ENCODE measurements at regions of chr20 and their contacts with region 1.

Region 1: DNA sequence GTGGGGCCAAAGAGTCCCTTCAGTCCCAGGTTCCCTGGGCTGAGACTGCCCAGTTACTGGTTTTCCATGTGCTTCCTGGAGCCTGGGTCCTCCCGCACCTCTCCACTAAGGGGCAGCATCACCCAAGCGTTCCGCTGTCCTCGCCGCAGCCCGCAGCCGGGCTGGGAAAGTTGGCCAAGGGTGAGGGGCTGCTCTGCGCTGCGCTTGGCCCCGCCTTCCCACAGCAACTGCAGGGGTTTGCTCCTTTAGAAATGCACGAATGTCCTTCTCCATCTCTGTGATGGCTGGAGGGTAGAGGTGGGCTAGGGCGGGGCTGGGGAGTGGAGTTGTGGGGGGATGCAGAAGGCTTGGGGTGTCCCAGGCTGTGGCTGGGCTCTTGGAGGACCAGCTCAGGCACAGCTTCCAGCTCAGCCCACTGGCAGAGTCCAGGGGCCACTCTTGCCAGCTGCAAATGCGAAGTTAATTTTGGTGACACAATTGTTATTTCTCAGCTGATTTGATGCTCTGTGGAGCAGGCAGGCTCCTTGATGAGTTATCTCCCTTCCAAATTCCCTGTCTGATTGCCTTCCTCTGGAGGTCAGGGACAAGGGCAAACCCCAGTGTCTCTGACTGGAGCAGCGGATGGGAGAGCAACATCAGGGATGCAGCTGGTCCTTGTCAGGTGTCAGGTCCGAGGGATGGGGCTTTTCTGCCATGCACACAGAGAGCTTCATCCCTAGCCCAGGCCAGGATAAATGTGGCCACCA is 63.2 kb downstream of the NOL4L start:
- DNase-seq: peak; percentile 68
- H3K4me3 Mint-ChIP-seq: no peak overlapping the region
- H3K27ac Mint-ChIP-seq: peak overlapping the region; percentile 46
- H3K4me1 Mint-ChIP-seq: peaks cover 55% of the 10 kb centered on the region
- H3K27me3 Mint-ChIP-seq: no peaks in the 10 kb centered on the region

Region 2: DNA sequence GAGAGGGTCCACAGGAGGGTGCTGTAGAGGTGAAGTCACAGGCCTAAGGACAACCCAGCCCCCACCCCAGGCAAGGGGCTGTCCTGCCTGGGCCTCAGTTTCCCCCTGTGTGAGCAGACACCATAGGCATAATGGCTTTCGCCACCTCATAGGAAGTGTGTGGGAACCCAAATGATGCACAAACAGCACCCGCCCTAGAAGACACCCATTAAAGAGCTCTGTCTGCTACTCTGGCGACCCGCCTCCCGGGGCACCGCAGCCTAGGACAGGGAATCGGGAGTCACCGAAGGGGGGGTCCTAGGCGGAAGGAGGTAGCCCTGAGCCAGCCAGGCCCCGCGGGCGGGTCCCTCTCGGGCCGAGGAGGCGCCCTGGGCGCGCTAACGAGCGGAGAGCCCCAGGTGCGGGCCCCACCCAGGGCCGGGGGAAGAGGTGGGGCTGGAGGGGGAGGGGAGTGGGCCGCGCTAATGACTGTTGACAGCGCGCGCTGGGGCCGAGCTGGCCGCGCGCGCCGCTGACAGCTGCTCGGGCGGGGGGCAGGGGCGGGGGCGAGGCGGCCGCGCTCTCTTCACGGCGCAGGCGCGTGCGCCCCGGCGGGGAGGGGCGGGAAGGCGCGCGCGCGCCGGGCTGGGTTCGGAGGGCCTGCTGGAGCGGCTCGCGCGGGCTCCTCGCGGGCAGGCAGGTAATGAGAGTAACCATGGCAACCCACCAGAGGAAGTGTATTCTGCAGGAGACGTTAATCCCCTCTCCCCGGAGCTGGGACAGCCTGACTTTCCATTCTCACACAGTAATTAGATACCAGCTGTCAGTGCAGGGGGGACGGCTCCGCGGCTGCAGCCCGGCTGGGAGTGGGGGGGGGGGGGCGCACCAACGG is 14.2 kb after region 1 on chr20:
- CTCF ChIA-PET with region 1: interaction called, 31 read pairs
- POLR2A ChIA-PET with region 1: interaction called, 6 read pairs
- DNase-seq: peak; percentile 89
- H3K4me3 Mint-ChIP-seq: peak overlapping the region; percentile 80
- H3K27ac Mint-ChIP-seq: peak overlapping the region; percentile 97
- H3K4me1 Mint-ChIP-seq: peaks cover 82% of the 10 kb centered on the region
- H3K27me3 Mint-ChIP-seq: no peaks in the 10 kb centered on the region

Region 3: GRCh38 chr20:32652739-32653526 is 131.0 kb after region 1 on chr20:
- CTCF ChIA-PET with region 1: interaction called, 60 read pairs
- POLR2A ChIA-PET with region 1: no interaction called
- DNase-seq: peak; percentile 89
- H3K4me3 Mint-ChIP-seq: no peak overlapping the region
- H3K27ac Mint-ChIP-seq: peak overlapping the region; percentile 66
- H3K4me1 Mint-ChIP-seq: peaks cover 14% of the 10 kb centered on the region
- H3K27me3 Mint-ChIP-seq: peaks cover 2% of the 10 kb centered on the region

Measured in activated CD4-positive, alpha-beta T cell treated with anti-CD3 and anti-CD28 coated beads, Interleukin-2, amount 10 ng/mL, durations not matched to agents 7 days and 5 days (primary cell).